ENCODE measurements at regions of chr4 and their contacts with region 1.

Region 1: GRCh38 chr4:41887821-41888686 is 47.2 kb upstream of the TMEM33 start:
- DNase-seq: peak; percentile 48
- H3K4me3 Mint-ChIP-seq: no peak overlapping the region
- H3K27ac Mint-ChIP-seq: no peak overlapping the region
- H3K4me1 Mint-ChIP-seq: no peaks in the 10 kb centered on the region
- H3K27me3 Mint-ChIP-seq: peaks cover 17% of the 10 kb centered on the region

Region 2: GRCh38 chr4:41692717-41693345 is 195.2 kb before region 1 on chr4:
- CTCF ChIA-PET with region 1: interaction called, 10 read pairs
- POLR2A ChIA-PET with region 1: no interaction called
- intact Hi-C with region 1: loop called (anchors 1 kb)
- DNase-seq: peak; percentile 52
- H3K4me3 Mint-ChIP-seq: no peak overlapping the region
- H3K27ac Mint-ChIP-seq: no peak overlapping the region
- H3K4me1 Mint-ChIP-seq: peaks cover 3% of the 10 kb centered on the region
- H3K27me3 Mint-ChIP-seq: peaks cover 3% of the 10 kb centered on the region

Region 3: DNA sequence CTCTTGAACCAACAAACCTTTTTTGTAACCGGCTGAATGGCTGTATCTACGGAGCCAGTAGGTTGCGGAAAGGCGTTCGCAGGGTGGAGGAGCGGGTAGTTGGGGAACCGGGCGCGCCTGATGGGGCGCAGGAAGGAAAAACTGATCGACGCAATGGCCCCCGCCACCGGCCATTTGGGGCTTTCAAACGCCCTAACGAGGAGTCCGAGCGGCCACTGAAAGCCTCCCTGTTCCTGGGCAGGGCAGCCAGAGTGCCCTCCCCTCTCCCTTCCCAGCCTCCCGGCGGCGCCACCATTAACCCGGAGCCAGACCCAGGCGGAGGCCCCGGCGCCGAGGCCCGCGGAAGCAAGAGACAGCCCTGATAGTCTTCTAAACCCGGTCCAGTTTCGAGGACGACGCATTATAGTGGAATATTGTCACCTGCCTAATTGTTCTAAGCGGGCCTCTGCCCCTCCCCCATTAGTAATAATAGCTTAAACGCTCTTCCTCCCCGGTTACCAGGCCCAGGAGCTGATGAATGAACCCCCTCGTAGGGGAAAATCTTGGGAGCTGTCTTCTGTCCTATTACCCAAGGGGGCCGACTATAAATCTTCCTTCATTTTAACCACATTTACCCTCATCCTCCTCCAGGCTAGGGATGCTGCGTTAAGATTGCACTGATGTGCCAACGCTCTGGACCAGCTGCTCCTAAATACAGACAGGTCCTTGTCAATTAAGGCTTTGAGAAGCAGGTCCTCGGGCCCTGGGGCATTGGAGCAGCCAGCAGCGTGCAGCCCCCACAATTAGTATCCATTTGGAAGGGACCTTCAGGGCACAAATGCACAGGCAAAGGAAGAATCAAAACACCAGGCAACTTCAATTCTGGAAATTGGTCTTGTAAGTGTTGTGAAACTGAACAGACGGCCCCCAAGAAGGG is 14.4 kb before region 1 on chr4:
- CTCF ChIA-PET with region 1: interaction called, 12 read pairs
- POLR2A ChIA-PET with region 1: no interaction called
- intact Hi-C with region 1: no loop called
- DNase-seq: no peak
- H3K4me3 Mint-ChIP-seq: no peak overlapping the region
- H3K27ac Mint-ChIP-seq: no peak overlapping the region
- H3K4me1 Mint-ChIP-seq: peaks cover 6% of the 10 kb centered on the region
- H3K27me3 Mint-ChIP-seq: peaks cover 66% of the 10 kb centered on the region

Region 4: GRCh38 chr4:42136371-42136770 is 248.3 kb after region 1 on chr4:
- CTCF ChIA-PET with region 1: no interaction called
- POLR2A ChIA-PET with region 1: no interaction called
- intact Hi-C with region 1: no loop called
- DNase-seq: no peak
- H3K4me3 Mint-ChIP-seq: no peak overlapping the region
- H3K27ac Mint-ChIP-seq: no peak overlapping the region
- H3K4me1 Mint-ChIP-seq: no peaks in the 10 kb centered on the region
- H3K27me3 Mint-ChIP-seq: peaks cover 11% of the 10 kb centered on the region